Activated naive CD4-positive, alpha-beta T cell treated with anti-CD3 and anti-CD28 coated beads for 36 hours (primary cell): ENCODE measurements at regions of chr10 and their contacts with region 1.

Region 1: DNA sequence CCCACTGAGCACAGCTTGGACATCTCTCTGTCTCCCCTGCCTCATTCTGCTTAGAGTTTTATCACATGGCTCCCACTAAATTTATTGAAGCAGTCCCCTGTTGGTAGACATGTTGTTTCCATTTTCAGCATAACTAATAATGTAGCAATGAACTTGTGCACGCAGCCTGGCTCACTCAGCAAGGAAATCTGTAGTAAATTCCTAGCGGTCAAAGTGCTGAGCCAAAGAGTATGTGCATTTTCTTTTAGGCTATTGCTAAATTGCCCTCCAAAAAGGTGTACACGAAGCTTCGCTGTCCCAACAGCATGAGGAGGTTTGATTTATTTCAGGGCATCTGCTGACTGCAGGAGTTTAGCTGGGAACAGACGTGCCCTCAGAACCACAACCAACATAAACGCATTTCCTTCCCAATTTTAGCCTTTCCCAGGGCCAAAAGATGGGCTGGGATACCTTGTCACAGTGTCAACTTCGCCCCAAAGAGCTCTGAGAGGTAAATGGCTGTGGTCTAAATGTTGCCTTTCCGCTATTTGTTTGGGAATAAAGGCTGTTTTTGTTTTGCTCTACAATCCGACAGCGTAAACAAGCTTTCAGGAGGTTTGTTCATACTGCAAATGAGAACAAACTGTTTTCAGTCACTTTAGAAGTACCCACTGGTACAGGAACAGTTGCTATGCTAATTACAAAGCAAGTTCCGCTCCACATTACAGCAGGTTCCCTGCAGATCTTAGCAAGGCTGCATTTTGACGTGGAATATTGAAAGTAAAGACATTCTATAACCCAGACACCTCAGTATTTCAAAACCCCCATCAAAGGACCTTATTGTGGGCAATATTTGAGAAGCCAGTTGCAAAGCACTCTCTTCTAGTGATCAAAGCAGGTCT is 16.8 kb downstream of the VSIR start:
- DNase-seq: peak; percentile 71
- H3K4me3 Mint-ChIP-seq: peak overlapping the region; percentile 68
- H3K27ac Mint-ChIP-seq: peak overlapping the region; percentile 96
- H3K4me1 Mint-ChIP-seq: peaks cover 88% of the 10 kb centered on the region
- H3K27me3 Mint-ChIP-seq: no peaks in the 10 kb centered on the region

Region 2: GRCh38 chr10:71527135-71527534 is 229.4 kb before region 1 on chr10:
- CTCF ChIA-PET with region 1: no interaction called
- intact Hi-C with region 1: no loop called
- DNase-seq: no peak
- H3K4me3 Mint-ChIP-seq: no peak overlapping the region
- H3K27ac Mint-ChIP-seq: no peak overlapping the region
- H3K4me1 Mint-ChIP-seq: peaks cover 7% of the 10 kb centered on the region
- H3K27me3 Mint-ChIP-seq: no peaks in the 10 kb centered on the region

Region 3: DNA sequence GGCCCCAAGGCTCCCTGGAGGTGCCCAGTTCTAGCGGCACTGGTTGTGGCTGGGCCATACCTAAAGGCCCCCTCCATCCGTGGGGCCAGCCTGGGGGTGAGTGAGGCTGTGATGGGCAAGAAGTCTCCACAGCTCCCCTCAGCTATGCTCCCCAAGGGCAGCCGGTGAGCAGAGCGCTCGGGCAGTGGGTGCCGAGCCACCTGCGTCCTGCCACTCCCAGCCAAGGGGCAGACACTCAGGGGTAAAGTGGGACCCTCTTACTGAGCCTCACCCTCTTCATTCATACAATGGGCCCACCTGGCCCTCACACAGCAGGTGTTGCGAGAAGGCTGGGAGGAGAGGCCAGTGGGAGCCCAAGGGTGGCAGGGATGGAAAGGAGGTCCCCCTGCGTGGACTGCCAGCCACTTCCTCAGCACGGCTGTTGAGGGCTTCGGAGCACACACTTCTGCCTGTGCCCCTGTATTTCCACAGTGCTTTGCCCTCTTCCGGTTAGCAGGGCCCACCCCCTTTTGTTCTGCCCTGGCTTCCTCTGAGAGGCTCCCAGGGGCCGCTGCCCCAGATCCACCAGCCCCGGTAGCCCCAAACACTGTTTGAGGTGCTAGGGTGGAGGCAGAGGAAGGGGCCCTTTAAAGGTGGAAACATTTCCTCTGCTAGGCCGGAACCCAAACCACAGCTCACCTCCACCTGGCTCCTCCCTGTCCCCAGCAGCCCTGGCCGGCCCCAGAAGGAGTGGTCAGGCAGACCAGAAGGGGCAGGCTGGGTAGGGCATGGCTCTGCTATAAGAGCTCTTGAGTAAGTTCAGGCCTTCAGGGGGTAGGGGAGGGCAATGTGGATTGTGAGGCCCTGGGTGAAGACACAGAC is 20.6 kb before region 1 on chr10:
- CTCF ChIA-PET with region 1: interaction called, 15 read pairs
- intact Hi-C with region 1: no loop called
- DNase-seq: peak; percentile 79
- H3K4me3 Mint-ChIP-seq: peak overlapping the region; percentile 57
- H3K27ac Mint-ChIP-seq: peak overlapping the region; percentile 98
- H3K4me1 Mint-ChIP-seq: peaks cover 99% of the 10 kb centered on the region
- H3K27me3 Mint-ChIP-seq: no peaks in the 10 kb centered on the region

Region 4: DNA sequence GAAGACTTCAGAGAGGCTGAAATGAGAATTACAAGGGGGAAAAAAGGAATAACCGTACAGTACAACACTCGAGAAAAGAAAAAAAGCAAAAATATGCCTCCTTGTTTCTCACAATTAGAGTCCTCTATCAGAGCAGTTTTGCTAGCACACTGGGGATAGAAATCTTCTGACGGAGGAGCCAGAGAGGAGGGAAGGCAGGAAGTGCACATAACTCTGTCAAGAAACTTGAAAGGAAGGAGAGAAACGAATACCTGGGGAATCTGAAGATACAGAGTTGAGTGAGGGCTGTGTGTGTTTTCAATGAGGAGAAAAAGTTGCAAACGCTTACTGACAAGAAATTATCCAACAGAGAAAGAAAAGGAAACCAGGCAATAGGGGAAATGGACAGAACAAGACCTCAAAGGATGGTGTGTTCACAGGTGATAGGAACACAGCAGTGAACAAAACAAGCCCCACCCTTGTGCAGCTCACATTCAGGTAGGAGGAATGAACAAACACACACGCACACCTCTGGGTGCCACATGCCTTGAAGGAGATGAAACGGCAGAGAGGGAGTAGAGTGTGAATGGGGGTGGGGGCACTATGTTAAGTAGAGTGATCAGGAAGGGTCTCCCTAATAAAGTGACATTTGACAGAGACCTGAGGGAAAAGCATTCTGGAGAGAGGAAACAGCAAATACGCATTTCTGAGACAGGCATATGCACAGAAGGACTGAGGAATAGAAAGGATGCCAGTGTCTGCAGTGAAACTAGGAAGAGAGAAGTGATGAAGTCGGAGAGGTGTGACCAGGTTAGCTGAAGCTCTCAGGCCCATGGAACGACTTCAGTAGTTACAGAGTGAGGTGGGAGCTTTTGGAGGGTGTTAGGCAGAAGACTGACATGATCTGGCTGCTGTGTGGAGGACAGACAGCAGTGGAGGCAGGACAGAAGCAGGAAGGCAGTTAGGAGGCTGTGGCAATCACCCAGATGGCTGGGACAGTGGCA is 378.5 kb after region 1 on chr10:
- CTCF ChIA-PET with region 1: no interaction called
- intact Hi-C with region 1: no loop called
- DNase-seq: peak; percentile 31
- H3K4me3 Mint-ChIP-seq: peak overlapping the region; percentile 19
- H3K27ac Mint-ChIP-seq: peak overlapping the region; percentile 53
- H3K4me1 Mint-ChIP-seq: peaks cover 37% of the 10 kb centered on the region
- H3K27me3 Mint-ChIP-seq: no peaks in the 10 kb centered on the region

Region 5: DNA sequence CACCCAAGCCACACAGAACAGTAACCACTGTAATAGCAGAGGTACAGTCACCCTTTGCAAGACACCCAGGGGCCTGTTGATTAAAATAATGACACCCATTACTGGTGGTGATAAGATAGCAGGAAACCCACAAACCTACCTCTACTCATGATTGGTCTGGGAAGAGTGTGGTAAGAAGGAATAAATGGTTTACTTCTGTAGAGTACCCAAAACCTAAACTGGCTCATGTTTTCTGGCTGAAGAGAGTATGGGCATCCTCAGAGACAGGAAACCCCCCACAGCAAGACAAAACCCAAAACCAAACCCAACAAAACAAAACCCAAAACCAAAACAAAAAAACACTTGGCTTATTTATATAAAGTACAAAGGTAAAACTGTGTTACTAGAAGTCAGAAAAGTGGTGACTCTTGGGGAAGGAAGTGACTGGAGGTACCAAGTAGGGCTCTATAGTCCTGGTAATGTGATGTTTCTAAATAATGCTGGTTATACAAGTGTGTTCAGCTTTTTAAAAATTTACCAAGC is 613.7 kb after region 1 on chr10:
- CTCF ChIA-PET with region 1: no interaction called
- intact Hi-C with region 1: no loop called
- DNase-seq: no peak
- H3K4me3 Mint-ChIP-seq: no peak overlapping the region
- H3K27ac Mint-ChIP-seq: no peak overlapping the region
- H3K4me1 Mint-ChIP-seq: peaks cover 6% of the 10 kb centered on the region
- H3K27me3 Mint-ChIP-seq: no peaks in the 10 kb centered on the region